ENCODE measurements at regions of chr11 and their contacts with region 1.

Region 1: GRCh38 chr11:118002541-118003423 is 16.6 kb downstream of the IL10RA start:
- DNase-seq: peak; percentile 90
- H3K4me3 Mint-ChIP-seq: peak overlapping the region; percentile 56
- H3K27ac Mint-ChIP-seq: peak overlapping the region; percentile 99
- H3K4me1 Mint-ChIP-seq: peaks cover 100% of the 10 kb centered on the region
- H3K27me3 Mint-ChIP-seq: no peaks in the 10 kb centered on the region

Region 2: GRCh38 chr11:117817368-117818040 is 185.3 kb before region 1 on chr11:
- CTCF ChIA-PET with region 1: interaction called, 6 read pairs
- POLR2A ChIA-PET with region 1: interaction called, 8 read pairs
- intact Hi-C with region 1: loop called (anchors 2 kb)
- DNase-seq: peak; percentile 96
- H3K4me3 Mint-ChIP-seq: peak overlapping the region; percentile 42
- H3K27ac Mint-ChIP-seq: peak overlapping the region; percentile 94
- H3K4me1 Mint-ChIP-seq: peaks cover 62% of the 10 kb centered on the region
- H3K27me3 Mint-ChIP-seq: no peaks in the 10 kb centered on the region

Region 3: DNA sequence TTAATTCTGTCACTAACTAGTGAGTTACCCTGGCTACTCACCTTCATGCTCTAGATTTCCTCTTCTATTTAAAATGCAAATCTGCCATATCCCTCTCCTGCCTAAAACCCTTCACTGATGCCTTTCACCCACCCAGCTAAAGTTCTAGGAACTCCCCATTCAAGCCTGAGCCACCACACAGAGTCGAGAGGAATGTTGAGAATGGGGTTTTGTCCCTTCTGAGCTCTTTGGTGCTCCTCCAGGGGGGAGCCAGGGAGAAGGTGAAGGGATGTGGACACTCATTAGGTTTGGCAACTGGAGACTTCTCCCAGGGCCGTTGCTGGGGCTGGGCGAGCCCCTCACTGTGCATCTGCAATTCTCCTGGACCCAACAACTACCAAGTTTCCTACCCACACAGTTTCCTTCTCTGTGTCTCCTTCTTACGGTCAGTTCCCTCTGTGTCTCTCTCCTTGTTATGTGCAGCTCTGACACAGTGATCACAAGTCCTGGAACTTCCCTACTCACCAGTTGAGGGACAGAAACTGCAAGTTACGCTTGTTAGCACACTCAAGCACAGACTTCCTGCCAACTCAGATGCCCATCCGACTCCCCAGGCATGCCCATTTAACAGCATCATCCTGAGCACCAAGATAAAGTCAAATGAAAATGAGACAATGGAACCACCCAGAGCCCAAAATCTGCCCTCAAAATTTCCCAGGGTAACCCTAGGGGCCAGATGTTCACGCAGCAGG is 23.1 kb before region 1 on chr11:
- CTCF ChIA-PET with region 1: interaction called, 5 read pairs
- POLR2A ChIA-PET with region 1: interaction called, 265 read pairs
- intact Hi-C with region 1: no loop called
- DNase-seq: peak; percentile 63
- H3K4me3 Mint-ChIP-seq: peak overlapping the region; percentile 2
- H3K27ac Mint-ChIP-seq: peak overlapping the region; percentile 85
- H3K4me1 Mint-ChIP-seq: peaks cover 80% of the 10 kb centered on the region
- H3K27me3 Mint-ChIP-seq: no peaks in the 10 kb centered on the region

Region 4: GRCh38 chr11:118033443-118033842 is 30.7 kb after region 1 on chr11:
- CTCF ChIA-PET with region 1: interaction called, 4 read pairs
- POLR2A ChIA-PET with region 1: interaction called, 17 read pairs
- intact Hi-C with region 1: loop called (anchors 1 kb)
- DNase-seq: peak; percentile 49
- H3K4me3 Mint-ChIP-seq: no peak overlapping the region
- H3K27ac Mint-ChIP-seq: peak overlapping the region; percentile 72
- H3K4me1 Mint-ChIP-seq: peaks cover 33% of the 10 kb centered on the region
- H3K27me3 Mint-ChIP-seq: no peaks in the 10 kb centered on the region

Region 5: GRCh38 chr11:118051611-118052461 is 49.1 kb after region 1 on chr11:
- CTCF ChIA-PET with region 1: interaction called, 79 read pairs
- POLR2A ChIA-PET with region 1: interaction called, 77 read pairs
- intact Hi-C with region 1: loop called (anchors 1 kb)
- DNase-seq: peak; percentile 82
- H3K4me3 Mint-ChIP-seq: peak overlapping the region; percentile 41
- H3K27ac Mint-ChIP-seq: peak overlapping the region; percentile 84
- H3K4me1 Mint-ChIP-seq: peaks cover 56% of the 10 kb centered on the region
- H3K27me3 Mint-ChIP-seq: no peaks in the 10 kb centered on the region

Region 6: GRCh38 chr11:118240999-118241768 is 238.4 kb after region 1 on chr11:
- CTCF ChIA-PET with region 1: no interaction called
- POLR2A ChIA-PET with region 1: no interaction called
- intact Hi-C with region 1: loop called (anchors 10 kb)
- DNase-seq: peak; percentile 84
- H3K4me3 Mint-ChIP-seq: peak overlapping the region; percentile 78
- H3K27ac Mint-ChIP-seq: peak overlapping the region; percentile 96
- H3K4me1 Mint-ChIP-seq: peaks cover 88% of the 10 kb centered on the region
- H3K27me3 Mint-ChIP-seq: no peaks in the 10 kb centered on the region

Measured in activated CD4-positive, alpha-beta memory T cell treated with anti-CD3 and anti-CD28 coated beads for 36 hours (primary cell).